BJ (cell line): ENCODE measurements at regions of chr12 and their contacts with region 1.

Region 1: DNA sequence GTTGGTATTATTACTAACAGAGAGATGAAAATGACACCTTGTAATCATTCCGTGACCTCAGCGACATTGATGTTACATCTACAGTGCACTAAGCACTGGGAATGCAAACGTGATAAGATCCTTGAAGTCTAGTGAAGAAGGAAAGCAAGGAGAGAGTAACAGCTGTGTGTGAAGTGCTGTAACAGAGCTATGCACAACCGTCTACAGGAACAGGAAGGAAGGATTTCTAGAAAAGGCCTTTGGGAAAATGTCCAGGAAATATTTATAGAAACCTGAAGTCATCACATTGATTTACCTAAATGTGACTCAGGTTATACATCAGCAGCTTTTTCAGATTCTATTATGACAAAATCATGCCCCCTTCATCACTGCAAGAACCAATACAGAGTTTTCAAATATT is 304.2 kb upstream of the AMIGO2 start:
- DNase-seq: no peak
- H3K4me3 ChIP-seq: no peak overlapping the region
- H3K27me3 ChIP-seq: no peaks in the 10 kb centered on the region
- CTCF ChIP-seq: no peak

Region 2: DNA sequence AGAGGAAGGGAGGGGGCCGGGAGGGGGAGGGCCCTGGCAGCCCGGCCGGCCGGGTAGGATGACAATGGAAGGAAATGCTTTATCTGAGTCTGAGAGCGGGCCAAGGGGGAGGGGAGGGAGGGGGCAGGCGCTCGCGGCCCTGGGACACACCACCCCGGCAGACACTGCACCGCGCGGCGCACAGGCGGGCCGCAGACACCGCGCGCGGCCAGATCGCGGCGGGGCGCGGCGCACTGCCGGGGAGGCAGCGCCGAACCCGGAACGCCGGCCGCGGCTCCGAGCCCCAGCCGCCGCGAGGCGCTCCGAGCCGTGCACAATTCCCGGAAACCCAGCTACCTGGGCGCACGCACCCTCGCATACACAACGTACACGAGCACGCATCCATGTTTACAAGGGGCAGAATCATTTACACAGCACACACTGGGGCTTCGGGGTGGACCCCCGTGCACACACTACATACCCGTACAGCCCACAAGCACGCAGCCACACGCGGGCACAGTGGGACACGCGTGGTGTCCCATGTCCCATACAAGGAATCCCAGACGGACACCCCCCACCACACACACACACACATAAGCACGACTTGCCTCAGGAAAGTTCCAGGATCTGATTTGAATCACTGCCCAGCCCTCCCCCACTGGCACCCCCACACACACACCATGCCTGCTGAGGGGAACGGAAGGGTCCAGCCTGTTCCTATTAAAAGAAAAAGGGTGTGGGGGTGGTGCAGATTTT is 436.1 kb after region 1 on chr12 and contains the start of gene HDAC7:
- CTCF ChIA-PET with region 1: no interaction called
- POLR2A ChIA-PET with region 1: interaction called, 10 read pairs
- DNase-seq: no peak
- H3K4me3 ChIP-seq: peak within 1 kb of the TSS; percentile 68
- H3K27me3 ChIP-seq: no peaks in the 10 kb centered on the region
- CTCF ChIP-seq: no peak
- polyA plus RNA-seq, gene HDAC7: 28.2 and 67.0 TPM in 2 replicates